ENCODE measurements at regions of chrX and their contacts with region 1.

Region 1: DNA sequence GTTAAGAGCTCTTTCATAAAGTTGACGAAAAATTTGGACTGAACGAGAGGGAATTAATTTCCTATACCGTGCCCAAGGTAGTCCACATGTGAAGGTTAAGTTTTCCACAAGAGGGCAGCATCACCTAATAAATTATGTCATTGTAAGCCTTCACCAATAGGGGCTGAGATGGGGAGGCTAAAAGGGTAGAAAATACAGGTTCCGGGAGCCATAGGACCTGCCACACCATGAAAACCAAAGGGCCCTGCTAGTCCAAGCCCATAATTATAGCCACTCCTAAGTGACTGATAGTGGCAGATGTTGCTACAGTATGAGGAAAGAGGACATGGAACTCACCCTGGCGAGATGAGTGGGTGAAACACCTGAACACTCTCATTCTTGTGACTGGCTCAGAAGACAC is 122.2 kb downstream of the SHROOM4 start:
- DNase-seq: peak in 4 of 5 donors; percentile 32 to 44 (median 36)
- H3K4me3 ChIP-seq: no peak overlapping the region
- H3K4me3 Mint-ChIP-seq: no peak overlapping the region
- H3K27ac ChIP-seq: no peak overlapping the region
- H3K27ac Mint-ChIP-seq: no peak overlapping the region
- H3K4me1 ChIP-seq: no peaks in the 10 kb centered on the region
- H3K4me1 Mint-ChIP-seq: no peaks in the 10 kb centered on the region
- H3K27me3 ChIP-seq: no peaks in the 10 kb centered on the region
- H3K27me3 Mint-ChIP-seq: peaks cover 7% of the 10 kb centered on the region in 2 donors

Region 2: GRCh38 chrX:50853399-50853798 is 161.6 kb after region 1 on chrX:
- CTCF ChIA-PET with region 1: no interaction called
- POLR2A ChIA-PET with region 1: no interaction called
- intact Hi-C with region 1: no loop called
- DNase-seq: no peak
- H3K4me3 ChIP-seq: no peak overlapping the region
- H3K4me3 Mint-ChIP-seq: no peak overlapping the region
- H3K27ac ChIP-seq: no peak overlapping the region
- H3K27ac Mint-ChIP-seq: no peak overlapping the region
- H3K4me1 ChIP-seq: no peaks in the 10 kb centered on the region
- H3K4me1 Mint-ChIP-seq: no peaks in the 10 kb centered on the region
- H3K27me3 ChIP-seq: no peaks in the 10 kb centered on the region
- H3K27me3 Mint-ChIP-seq: peaks cover 0 to 1% of the 10 kb centered on the region in 2 donors

Region 3: GRCh38 chrX:50905334-50905733 is 213.5 kb after region 1 on chrX:
- CTCF ChIA-PET with region 1: no interaction called
- POLR2A ChIA-PET with region 1: no interaction called
- intact Hi-C with region 1: loop called (anchors 5 kb)
- DNase-seq: no peak
- H3K4me3 ChIP-seq: no peak overlapping the region
- H3K4me3 Mint-ChIP-seq: no peak overlapping the region
- H3K27ac ChIP-seq: no peak overlapping the region
- H3K27ac Mint-ChIP-seq: no peak overlapping the region
- H3K4me1 ChIP-seq: no peaks in the 10 kb centered on the region
- H3K4me1 Mint-ChIP-seq: no peaks in the 10 kb centered on the region
- H3K27me3 ChIP-seq: no peaks in the 10 kb centered on the region
- H3K27me3 Mint-ChIP-seq: no peaks in the 10 kb centered on the region

Region 4: DNA sequence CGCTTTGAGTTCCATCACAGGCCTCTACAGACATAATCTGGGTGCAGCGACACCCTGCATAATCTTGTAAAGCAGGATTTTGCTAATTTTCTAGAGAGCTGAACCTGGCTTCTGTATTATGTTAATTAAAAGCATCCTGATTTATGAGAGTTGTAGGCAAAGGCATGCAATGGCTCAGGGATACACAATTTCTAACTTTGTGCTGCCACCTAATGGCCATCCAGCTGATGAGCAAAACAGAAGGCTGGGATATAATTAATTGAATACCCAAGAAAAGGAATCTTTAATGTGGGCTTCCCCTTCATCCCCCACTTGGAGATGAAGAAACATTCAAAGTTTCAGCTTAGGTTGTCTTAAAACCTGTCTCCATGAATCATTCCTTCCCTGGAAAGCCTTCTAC is 296.8 kb after region 1 on chrX:
- CTCF ChIA-PET with region 1: no interaction called
- POLR2A ChIA-PET with region 1: no interaction called
- intact Hi-C with region 1: loop called (anchors 5 kb)
- DNase-seq: peak in 2 of 5 donors; percentile 5 to 10
- H3K4me3 ChIP-seq: no peak overlapping the region
- H3K4me3 Mint-ChIP-seq: no peak overlapping the region
- H3K27ac ChIP-seq: no peak overlapping the region
- H3K27ac Mint-ChIP-seq: no peak overlapping the region
- H3K4me1 ChIP-seq: no peaks in the 10 kb centered on the region
- H3K4me1 Mint-ChIP-seq: no peaks in the 10 kb centered on the region
- H3K27me3 ChIP-seq: no peaks in the 10 kb centered on the region
- H3K27me3 Mint-ChIP-seq: peaks cover 0 to 3% of the 10 kb centered on the region in 2 donors

Measured in CD4-positive, alpha-beta memory T cell (primary cell).